ENCODE measurements at regions of chr12 and their contacts with region 1.

Region 1: GRCh38 chr12:53427905-53428594 is 4.4 kb downstream of the AMHR2 start:
- DNase-seq: peak; percentile 98
- H3K4me3 ChIP-seq: no peak overlapping the region
- H3K27ac ChIP-seq: no peak overlapping the region
- H3K4me1 ChIP-seq: peaks cover 13% of the 10 kb centered on the region
- H3K27me3 ChIP-seq: no peaks in the 10 kb centered on the region
- CTCF ChIP-seq: no peak

Region 2: GRCh38 chr12:53344824-53345485 is 83.1 kb before region 1 on chr12:
- CTCF ChIA-PET with region 1: no interaction called
- dilution Hi-C with region 1: loop called (anchors 5 kb)
- in situ Hi-C with region 1: loop called in 1 of 2 experiments (anchors 5 kb)
- intact Hi-C with region 1: no loop called
- DNase-seq: peak; percentile 58
- H3K4me3 ChIP-seq: peak overlapping the region; percentile 59 to 65 (median 62)
- H3K27ac ChIP-seq: no peak overlapping the region
- H3K4me1 ChIP-seq: peaks cover 6% of the 10 kb centered on the region
- H3K27me3 ChIP-seq: no peaks in the 10 kb centered on the region
- CTCF ChIP-seq: peak; percentile 40 to 84

Region 3: DNA sequence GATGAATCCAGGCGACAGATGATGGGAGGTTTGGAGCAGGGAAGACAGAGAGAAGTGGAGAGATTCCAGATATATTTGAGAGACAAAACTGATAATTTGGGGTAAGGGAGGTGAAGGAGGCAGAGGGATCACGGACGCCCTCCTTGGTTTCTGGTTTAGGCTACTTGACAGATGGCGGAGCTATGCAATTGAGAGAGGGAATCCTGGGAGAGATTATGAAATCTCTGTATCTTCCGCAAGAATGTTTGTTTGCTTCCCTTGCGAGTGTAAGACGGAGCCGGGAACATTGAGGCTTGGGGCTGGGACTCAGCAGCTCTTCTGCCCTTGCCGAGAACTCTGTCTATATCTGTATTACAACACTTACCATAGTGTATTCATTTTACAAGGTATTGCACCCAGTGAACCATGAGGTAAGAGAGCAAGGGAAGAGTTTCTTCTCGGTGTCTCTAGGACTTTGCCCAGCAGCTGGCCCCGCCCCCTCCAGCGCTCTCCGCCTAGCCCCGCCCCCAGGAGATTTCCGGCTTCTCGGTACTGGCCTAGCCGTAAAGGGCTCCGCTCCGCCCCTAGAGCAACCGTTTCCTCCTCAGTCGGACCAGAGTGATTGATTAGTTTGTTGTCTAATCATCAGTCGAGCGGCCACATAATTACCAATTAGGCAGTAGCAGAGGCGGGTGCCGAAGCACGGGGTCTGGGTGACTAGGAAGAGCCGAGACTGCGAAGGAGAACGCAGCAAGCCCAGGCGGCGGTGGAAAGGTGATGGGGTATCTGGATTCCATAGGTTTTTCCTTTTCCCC is 13.2 kb after region 1 on chr12 and contains the start of gene PRR13:
- CTCF ChIA-PET with region 1: no interaction called
- dilution Hi-C with region 1: no loop called
- in situ Hi-C with region 1: no loop called
- intact Hi-C with region 1: loop called (anchors 1 kb)
- DNase-seq: peak; percentile 99
- H3K4me3 ChIP-seq: peak within 1 kb of the TSS; percentile 55 to 87 (median 74)
- H3K27ac ChIP-seq: peak within 1 kb of the TSS; percentile 68
- H3K4me1 ChIP-seq: peaks cover 8% of the 10 kb centered on the region
- H3K27me3 ChIP-seq: no peaks in the 10 kb centered on the region
- CTCF ChIP-seq: peak in 1 of 2 donors; percentile 1
- total RNA-seq, gene PRR13: 43.5 to 158 TPM

Region 4: GRCh38 chr12:53451661-53452158 is 23.7 kb after region 1 on chr12 and contains the start of gene PCBP2:
- CTCF ChIA-PET with region 1: no interaction called
- dilution Hi-C with region 1: no loop called
- in situ Hi-C with region 1: no loop called
- intact Hi-C with region 1: loop called (anchors 1 kb)
- DNase-seq: peak; percentile 99
- H3K4me3 ChIP-seq: peak within 1 kb of the TSS; percentile 68 to 99 (median 99)
- H3K27ac ChIP-seq: peak within 1 kb of the TSS; percentile 87
- H3K4me1 ChIP-seq: peaks cover 11% of the 10 kb centered on the region
- H3K27me3 ChIP-seq: no peaks in the 10 kb centered on the region
- CTCF ChIP-seq: peak; percentile 92 to 93
- total RNA-seq, gene PCBP2: 187 to 654 TPM

Region 5: DNA sequence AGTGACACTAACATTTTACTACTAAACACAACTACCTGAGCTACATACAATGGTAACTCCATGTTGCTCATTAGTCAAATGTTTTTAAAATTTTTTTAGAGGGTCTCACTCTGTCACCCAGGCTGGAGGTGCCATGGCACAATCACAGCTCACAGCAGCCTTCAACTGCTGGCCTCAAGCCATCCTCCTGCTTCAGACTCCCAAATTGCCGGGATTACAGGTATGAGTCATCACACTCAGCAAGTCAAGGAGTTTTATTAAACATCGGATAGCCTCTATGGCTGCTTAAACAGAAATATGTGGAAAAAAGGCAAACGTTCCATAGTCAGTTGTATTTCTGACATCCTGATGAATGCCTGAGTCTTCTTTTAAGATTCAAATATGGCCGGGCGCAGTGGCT is 90.3 kb after region 1 on chr12:
- CTCF ChIA-PET with region 1: no interaction called
- dilution Hi-C with region 1: loop called (anchors 5 kb)
- in situ Hi-C with region 1: no loop called
- intact Hi-C with region 1: no loop called
- DNase-seq: no peak
- H3K4me3 ChIP-seq: no peak overlapping the region
- H3K27ac ChIP-seq: no peak overlapping the region
- H3K4me1 ChIP-seq: no peaks in the 10 kb centered on the region
- H3K27me3 ChIP-seq: no peaks in the 10 kb centered on the region
- CTCF ChIP-seq: no peak